ENCODE measurements at regions of chr19 and their contacts with region 1.

Region 1: DNA sequence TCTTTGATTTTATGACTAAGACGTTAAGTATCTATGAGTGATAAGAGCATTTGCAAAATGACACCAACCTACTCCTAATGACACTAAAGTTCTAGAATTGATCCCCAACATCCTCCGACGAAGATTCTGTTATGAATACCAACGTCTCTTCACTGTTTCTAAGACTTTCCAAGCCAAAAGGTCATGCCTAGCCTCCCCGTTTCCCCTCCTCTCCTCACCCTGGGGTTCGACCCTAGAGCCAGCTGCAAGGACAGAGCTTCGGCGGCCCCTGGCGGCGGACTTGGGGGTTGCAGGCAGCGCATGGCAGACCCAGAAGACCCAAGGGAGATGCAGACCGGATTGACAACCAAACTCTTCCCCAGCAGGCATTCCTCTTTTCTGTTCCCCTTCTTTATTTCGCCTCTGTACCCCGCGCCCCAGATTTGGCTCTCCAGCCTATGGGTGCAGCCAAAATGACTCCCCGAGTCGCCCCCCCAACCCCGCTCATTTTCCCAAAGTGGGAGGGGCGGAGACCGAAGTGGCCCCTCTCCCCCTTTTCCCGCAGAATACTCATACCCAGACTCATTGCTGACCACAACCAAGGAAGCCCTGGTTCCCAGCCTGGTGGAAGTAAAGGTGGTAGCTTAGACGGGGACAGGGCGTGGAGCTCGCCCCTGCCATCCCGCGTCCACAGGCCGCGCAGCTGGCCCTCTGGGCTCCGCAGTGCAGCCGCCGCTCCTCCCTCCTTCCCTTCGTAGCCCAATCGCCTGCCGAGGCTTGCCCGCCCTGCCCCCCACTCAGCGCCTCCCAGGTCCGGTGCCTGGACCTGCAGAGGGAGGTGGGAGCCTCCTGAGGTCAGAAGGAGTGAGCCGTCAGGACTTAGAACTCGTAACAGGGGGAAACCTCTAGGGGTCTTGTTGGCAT is 4.1 kb upstream of the EML2 start:
- DNase-seq: peak; percentile 97
- H3K4me3 ChIP-seq: peak overlapping the region in 6 of 8 donors; percentile 39 to 71 (median 46)
- H3K27ac ChIP-seq: peak overlapping the region; percentile 63 to 94 (median 90)
- H3K4me1 ChIP-seq: peaks cover 29 to 80% (median 67%) of the 10 kb centered on the region in 6 donors
- H3K27me3 ChIP-seq: peaks cover 0 to 39% (median 14%) of the 10 kb centered on the region in 7 donors
- CTCF ChIP-seq: peak; percentile 97 to 99 (median 98)
- POLR2A ChIP-seq: no peak

Region 2: DNA sequence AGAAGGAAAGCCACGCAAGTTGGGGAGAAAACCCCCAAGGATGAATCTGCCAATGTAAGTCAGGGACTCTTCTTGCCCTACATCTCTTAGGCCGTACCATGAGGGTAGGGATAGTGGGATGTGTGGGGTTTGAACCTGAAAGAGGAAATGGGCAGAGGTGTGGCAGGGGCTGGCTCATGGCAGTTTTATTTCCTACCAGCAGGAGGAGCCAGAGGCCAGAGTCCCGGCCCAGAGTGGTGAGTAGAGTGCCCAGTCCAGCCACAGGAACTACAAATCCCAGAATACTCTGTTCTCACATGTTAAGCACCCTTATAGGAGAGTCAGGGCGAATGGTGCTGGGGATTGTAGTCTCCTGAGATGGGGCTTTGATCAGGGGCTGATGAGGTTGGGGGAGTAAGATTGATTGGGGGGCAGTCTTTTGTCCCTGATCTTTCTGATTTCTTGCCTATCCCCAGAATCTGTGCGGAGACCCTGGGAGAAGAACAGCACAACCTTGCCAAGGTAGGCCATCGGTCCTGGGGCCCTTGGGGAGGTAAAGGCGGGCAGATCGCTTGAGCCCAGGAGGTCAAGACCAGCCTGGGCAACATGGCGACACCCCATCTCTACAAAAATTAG is 119.5 kb before region 1 on chr19:
- intact Hi-C with region 1: loop called (anchors 5 kb)
- DNase-seq: peak; percentile 91
- H3K4me3 ChIP-seq: no peak overlapping the region
- H3K27ac ChIP-seq: peak overlapping the region in 5 of 8 donors; percentile 53 to 63 (median 55)
- H3K4me1 ChIP-seq: peaks cover 6 to 88% (median 44%) of the 10 kb centered on the region in 6 donors
- H3K27me3 ChIP-seq: no peaks in the 10 kb centered on the region
- CTCF ChIP-seq: peak; percentile 76 to 97 (median 94)
- POLR2A ChIP-seq: no peak

Region 3: GRCh38 chr19:45607071-45608029 is 35.9 kb before region 1 on chr19:
- intact Hi-C with region 1: loop called (anchors 5 kb)
- DNase-seq: peak; percentile 84
- H3K4me3 ChIP-seq: peak overlapping the region in 4 of 8 donors; percentile 4 to 54 (median 8)
- H3K27ac ChIP-seq: peak overlapping the region in 5 of 8 donors; percentile 18 to 65 (median 46)
- H3K4me1 ChIP-seq: peaks cover 6 to 18% (median 13%) of the 10 kb centered on the region in 6 donors
- H3K27me3 ChIP-seq: peaks cover 0 to 21% (median 8%) of the 10 kb centered on the region in 7 donors
- CTCF ChIP-seq: peak; percentile 60 to 90 (median 84)
- POLR2A ChIP-seq: no peak

Measured in spleen (tissue), 13 donors.